Left ventricle myocardium superior (tissue), 1 donor: ENCODE measurements at regions of chr12 and their contacts with region 1.

Region 1: DNA sequence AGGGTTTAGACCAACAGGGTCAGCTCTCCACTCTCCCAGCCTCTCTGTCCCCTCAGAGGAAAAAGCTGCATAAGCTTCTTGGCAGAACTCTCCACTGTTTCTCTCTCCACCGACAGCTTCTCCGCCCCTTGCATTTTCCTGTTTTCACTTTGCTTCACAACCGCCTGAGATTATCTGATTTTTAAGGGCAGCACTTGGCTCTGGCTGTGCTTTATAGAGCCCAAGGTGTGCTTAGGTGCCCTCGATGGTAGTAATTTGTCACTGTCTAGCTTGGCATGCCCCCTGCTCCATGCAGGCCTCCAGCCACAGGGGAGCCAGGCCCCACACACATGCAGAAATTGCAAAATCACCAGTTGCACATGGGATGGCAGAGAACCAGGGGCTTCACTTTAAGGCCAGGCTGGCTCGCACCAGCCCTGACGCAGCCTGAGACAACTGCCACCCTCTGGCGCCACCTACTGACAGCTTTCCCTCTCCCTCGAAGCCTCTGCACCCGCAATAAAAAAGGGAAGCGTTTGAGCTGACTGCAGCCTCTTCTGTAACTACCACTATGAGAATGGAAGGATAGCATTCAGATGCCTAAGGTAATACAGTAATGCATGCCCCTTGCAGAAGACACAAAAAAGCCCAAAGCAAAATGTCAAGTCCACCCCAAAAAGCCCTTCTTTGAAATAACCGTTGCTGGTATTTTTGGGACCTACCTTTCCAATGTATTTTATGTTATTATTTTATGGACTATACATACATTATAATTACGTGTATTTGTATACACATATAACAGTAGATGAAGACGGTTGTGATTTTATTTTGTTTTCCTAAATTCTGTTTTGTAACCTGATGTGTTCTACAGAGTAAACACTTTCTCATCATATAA is 32.0 kb upstream of the RIMBP2 start:
- DNase-seq: peak; percentile 86
- ATAC-seq: peak; percentile 93

Region 2: GRCh38 chr12:130401703-130402102 is 346.4 kb before region 1 on chr12:
- intact Hi-C with region 1: loop called (anchors 5 kb)
- DNase-seq: no peak
- ATAC-seq: peak; percentile 45

Region 3: DNA sequence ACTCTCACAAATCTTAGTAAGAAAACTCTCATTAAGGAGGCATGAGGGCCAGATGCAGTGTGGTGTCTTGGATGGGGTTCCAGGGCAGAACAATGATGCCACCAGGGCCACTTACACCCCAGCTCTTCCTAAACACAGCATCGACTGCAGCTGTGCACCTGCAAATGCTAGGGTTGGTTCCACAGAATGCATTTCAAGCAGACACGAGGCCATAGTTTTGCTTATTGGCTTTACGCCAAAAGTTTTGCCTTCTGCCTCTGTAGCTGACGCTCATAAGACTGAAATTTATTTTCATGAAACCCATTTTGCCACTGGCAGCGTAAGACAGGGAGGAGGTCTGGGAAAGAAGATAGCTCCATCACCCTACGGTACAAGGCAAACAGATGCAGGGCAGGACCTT is 211.1 kb before region 1 on chr12:
- intact Hi-C with region 1: no loop called
- DNase-seq: no peak
- ATAC-seq: no peak

Region 4: DNA sequence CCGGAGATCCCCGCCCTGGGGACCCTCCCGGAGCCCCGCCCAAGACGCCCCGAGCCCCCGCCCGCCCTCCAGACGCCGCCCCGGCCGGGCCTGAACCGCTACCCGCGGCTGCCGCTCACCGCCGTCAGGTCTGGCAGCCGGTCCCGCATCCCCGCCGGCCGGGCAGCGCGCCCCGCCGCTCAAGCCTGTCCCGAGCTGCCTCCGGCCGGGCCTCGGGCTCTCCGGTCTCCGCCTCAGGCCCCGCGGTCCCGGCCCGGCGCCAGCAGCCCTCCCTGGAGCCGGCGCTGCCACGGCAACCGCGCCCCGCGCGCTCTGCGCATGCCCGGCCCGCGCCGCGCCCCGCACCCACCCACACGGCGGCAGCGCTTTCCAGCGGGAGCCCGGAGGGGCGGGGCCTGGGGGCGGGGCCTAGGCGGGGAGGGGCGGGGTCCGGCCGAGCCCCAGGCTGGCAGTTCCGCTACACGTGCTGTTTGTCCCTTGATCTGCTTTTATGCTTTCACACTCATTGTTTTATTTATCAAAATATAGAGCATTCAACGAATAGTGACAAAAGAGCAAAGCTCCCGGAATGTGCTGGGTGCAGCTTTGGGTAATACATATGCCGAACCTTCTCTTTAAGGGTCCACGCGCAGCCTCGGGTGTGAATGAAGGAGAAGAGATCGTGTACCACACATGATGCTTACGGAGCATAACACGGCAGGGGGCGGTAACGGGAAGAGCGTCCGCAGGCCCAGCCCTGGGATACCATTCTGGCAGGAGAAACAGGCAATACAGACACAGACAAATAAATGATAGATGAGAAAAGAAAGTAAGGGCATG is 91.1 kb after region 1 on chr12 and contains the start of gene STX2:
- intact Hi-C with region 1: no loop called
- DNase-seq: peak; percentile 95
- ATAC-seq: peak; percentile 97
- total RNA-seq, gene STX2: 12.1 TPM